ENCODE measurements at regions of chr1 and their contacts with region 1.

Region 1: GRCh38 chr1:150596095-150596892 is 16.9 kb upstream of the MCL1 start:
- DNase-seq: no peak
- ATAC-seq: no peak
- H3K4me3 ChIP-seq: no peak overlapping the region
- H3K27ac ChIP-seq: no peak overlapping the region
- H3K4me1 ChIP-seq: no peaks in the 10 kb centered on the region
- H3K27me3 ChIP-seq: no peaks in the 10 kb centered on the region
- CTCF ChIP-seq: no peak

Region 2: DNA sequence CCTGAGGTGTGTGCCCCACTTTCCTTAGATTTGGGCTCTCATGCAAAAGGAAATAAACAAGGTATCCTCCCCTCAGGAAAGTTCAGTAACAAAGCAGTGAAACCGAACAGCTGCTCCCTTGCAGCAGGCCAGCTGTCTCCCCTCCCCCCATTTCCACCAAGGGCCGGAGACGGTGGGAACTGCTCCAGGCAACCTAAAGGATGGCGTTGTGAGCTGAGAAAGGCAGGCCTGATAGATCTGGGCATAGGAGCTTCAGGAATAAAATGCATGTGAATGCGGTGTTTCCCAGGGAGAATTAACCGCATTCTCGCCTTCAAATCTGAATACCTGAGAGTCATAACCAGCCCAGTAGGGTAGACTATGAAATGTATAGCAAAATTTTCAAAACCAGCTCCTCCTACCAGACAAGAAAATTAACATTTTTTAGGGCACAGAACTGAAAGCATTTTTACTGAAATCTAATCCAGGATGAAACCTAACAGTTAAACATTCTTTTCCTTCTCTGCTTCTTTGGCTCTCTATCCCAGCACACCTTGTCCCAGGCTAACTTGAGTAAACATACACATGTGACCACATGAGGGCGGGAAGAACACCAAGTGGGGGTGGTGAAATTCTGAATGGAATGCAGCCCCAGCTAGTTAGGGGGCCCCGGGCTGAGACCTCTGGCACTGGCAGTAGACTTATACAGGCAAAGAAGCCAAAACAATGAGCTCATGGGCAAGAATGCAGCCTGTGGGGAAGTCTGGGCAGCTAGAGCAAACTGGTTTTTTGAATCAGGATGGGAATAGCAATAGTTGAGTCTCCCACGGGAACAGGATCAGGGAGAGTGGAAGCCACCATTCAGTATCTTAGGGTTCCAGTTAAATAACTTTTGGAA is 28.3 kb before region 1 on chr1:
- intact Hi-C with region 1: loop called in 1 of 10 experiments (anchors 2 kb)
- DNase-seq: peak in 1 of 2 donors; percentile 74
- ATAC-seq: peak; percentile 41 to 92 (median 62)
- H3K4me3 ChIP-seq: peak overlapping the region in 9 of 10 donors; percentile 12 to 47 (median 34)
- H3K27ac ChIP-seq: peak overlapping the region; percentile 78 to 100 (median 99)
- H3K4me1 ChIP-seq: peaks cover 48 to 100% (median 99%) of the 10 kb centered on the region in 9 donors
- H3K27me3 ChIP-seq: no peaks in the 10 kb centered on the region
- CTCF ChIP-seq: peak in 1 of 9 donors; percentile 19